ENCODE measurements at regions of chr6 and their contacts with region 1.

Region 1: GRCh38 chr6:79570129-79571029 is 33.1 kb upstream of the LCA5 start:
- DNase-seq: peak; percentile 53
- H3K4me3 ChIP-seq: no peak overlapping the region
- H3K27ac ChIP-seq: no peak overlapping the region
- H3K4me1 ChIP-seq: peaks cover under 1% of the 10 kb centered on the region
- H3K27me3 ChIP-seq: no peaks in the 10 kb centered on the region
- CTCF ChIP-seq: peak; percentile 75

Region 2: DNA sequence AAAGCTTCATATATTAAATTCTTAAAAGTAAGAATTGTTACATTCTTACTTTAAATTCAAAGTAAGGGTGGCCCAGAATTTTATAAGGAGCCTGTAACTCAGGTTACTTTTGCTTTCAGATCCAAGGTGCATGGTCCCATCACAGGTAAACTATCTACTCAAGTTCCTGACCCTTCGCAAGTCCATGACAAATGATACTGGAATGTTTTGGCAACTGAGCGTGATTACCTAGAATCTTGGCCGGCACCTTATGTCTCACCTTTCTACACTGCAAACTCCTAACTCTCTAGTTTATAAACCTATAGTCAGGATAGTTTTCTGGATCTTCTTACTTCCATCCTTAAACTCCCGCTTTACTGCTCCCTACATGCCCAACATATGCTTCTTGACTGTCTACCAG is 268.0 kb before region 1 on chr6:
- CTCF ChIA-PET with region 1: no interaction called
- POLR2A ChIA-PET with region 1: no interaction called
- intact Hi-C with region 1: no loop called
- DNase-seq: no peak
- H3K4me3 ChIP-seq: no peak overlapping the region
- H3K27ac ChIP-seq: no peak overlapping the region
- H3K4me1 ChIP-seq: no peaks in the 10 kb centered on the region
- H3K27me3 ChIP-seq: no peaks in the 10 kb centered on the region
- CTCF ChIP-seq: no peak

Region 3: DNA sequence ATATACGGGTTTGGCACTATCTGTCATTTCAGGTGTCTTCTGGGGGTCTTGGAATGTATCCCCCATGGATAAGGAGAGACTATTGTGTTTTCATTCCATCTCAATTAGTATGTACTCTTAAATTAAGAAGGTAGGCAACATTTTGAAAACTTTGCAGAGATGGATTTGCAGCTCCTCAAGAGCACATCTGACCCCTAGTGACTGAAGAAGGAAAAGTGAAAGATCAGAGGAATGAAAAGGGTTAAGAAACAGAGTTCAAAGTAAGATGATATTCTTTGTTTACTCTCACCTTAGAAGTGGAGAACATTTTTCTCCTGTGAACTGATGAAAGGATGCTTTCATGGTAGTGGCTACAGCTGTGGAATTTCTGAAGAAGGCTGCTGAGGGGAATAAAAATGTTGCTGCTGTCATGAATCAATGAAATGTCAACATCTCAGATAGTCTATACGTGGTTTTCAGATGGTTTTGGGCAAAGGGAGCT is 102.3 kb after region 1 on chr6:
- CTCF ChIA-PET with region 1: interaction called, 5 read pairs
- POLR2A ChIA-PET with region 1: no interaction called
- intact Hi-C with region 1: loop called (anchors 2 kb)
- DNase-seq: peak; percentile 25
- H3K4me3 ChIP-seq: no peak overlapping the region
- H3K27ac ChIP-seq: no peak overlapping the region
- H3K4me1 ChIP-seq: no peaks in the 10 kb centered on the region
- H3K27me3 ChIP-seq: no peaks in the 10 kb centered on the region
- CTCF ChIP-seq: peak; percentile 58

Region 4: DNA sequence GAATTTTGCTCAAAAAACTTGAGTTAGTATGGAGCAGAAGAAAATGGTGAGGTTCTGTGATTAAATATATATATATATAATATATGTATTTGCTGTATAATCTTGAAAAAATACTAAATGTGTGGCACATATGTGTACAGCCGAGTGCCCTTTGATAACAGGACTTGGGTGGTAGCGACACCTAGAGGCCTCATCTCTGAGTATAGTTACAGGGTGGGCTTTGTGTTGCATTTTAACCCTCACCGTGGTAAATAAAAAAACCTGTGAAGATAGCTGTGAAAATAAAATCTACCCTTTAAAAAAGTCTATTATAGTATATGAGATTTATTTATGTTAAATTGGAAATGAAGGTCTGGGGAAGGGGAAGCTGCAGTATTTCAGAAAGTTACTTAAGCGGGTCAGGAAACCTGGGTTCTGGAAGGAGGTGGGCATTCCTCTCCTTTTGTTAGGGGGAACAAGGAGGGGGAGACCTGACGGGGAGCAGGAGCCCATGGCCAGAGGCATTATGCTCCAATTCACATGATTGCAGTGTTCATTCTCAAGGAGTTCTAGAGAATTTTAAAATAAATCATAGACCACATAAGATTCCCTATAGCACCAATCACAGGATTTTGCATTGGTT is 143.4 kb after region 1 on chr6:
- CTCF ChIA-PET with region 1: no interaction called
- POLR2A ChIA-PET with region 1: no interaction called
- intact Hi-C with region 1: loop called (anchors 2 kb)
- DNase-seq: peak; percentile 69
- H3K4me3 ChIP-seq: no peak overlapping the region
- H3K27ac ChIP-seq: no peak overlapping the region
- H3K4me1 ChIP-seq: no peaks in the 10 kb centered on the region
- H3K27me3 ChIP-seq: no peaks in the 10 kb centered on the region
- CTCF ChIP-seq: peak; percentile 81

Region 5: DNA sequence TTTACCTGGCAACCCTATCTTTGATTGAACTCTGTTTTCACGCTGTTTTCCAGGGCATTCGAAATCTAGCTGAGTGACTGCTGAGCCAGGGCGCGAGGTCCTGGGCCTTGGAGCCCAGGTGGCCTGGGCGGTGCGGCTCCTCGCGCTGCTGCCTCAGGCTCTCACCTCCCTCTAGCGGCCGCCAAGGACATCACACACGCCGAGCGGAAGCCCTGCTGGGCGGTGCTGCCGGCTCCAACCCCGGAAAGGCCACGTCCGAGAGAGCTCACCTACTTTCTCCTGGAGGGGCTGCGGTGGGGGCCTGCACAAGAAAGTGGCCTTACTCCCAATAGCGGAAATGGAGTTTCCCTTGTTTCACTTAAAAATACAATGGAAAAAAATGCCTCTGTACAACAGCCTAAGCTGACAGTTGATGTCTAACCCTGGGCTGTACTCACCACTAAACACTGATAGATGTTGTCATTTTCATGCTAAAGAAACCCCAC is 299.3 kb after region 1 on chr6:
- CTCF ChIA-PET with region 1: interaction called, 5 read pairs
- POLR2A ChIA-PET with region 1: no interaction called
- intact Hi-C with region 1: loop called (anchors 2 kb)
- DNase-seq: peak; percentile 74
- H3K4me3 ChIP-seq: peak overlapping the region; percentile 14
- H3K27ac ChIP-seq: no peak overlapping the region
- H3K4me1 ChIP-seq: no peaks in the 10 kb centered on the region
- H3K27me3 ChIP-seq: no peaks in the 10 kb centered on the region
- CTCF ChIP-seq: peak; percentile 94